ENCODE measurements at regions of chr7 and their contacts with region 1.

Region 1: DNA sequence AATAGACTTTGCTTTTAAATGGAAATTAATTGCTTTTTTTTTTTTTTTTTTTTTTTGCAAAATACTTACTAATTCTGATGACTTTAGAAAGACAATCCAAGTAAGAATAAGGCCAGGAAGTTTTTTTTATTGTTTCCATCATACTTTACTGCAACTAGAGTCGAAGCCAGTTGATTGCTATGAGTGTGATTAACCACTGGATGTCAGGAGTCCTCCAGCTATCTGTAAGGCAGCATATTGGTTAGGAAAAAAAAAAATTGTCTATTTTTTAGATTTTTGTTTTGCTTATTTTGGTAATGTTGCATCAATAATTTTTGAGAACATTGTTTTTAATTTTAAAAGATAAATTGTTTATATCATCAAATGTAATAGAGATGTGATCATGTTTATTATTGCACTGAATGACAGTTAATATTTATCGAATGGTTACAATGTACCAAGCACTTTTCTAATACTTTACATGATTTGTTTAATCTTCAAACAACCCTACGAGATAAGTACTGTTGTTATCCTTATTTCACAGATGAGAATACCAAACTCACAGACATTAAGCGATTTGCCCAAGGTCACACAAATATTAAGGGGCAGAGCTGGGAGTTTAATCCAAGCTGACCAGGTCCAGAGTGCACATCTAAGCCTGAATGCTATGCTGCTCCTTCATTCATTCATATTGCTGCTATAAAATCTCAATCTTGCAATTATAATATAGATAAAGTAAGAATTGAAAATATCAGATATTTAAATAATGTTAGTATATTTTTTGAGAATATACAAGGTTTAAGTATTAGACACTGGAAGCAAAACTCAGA is 19.9 kb upstream of the LMOD2 start:
- DNase-seq: peak; percentile 59
- H3K4me3 Mint-ChIP-seq: no peak overlapping the region
- H3K27ac Mint-ChIP-seq: no peak overlapping the region
- H3K4me1 Mint-ChIP-seq: peaks cover 22% of the 10 kb centered on the region
- H3K27me3 Mint-ChIP-seq: no peaks in the 10 kb centered on the region
- CTCF ChIP-seq: peak; percentile 70

Region 2: DNA sequence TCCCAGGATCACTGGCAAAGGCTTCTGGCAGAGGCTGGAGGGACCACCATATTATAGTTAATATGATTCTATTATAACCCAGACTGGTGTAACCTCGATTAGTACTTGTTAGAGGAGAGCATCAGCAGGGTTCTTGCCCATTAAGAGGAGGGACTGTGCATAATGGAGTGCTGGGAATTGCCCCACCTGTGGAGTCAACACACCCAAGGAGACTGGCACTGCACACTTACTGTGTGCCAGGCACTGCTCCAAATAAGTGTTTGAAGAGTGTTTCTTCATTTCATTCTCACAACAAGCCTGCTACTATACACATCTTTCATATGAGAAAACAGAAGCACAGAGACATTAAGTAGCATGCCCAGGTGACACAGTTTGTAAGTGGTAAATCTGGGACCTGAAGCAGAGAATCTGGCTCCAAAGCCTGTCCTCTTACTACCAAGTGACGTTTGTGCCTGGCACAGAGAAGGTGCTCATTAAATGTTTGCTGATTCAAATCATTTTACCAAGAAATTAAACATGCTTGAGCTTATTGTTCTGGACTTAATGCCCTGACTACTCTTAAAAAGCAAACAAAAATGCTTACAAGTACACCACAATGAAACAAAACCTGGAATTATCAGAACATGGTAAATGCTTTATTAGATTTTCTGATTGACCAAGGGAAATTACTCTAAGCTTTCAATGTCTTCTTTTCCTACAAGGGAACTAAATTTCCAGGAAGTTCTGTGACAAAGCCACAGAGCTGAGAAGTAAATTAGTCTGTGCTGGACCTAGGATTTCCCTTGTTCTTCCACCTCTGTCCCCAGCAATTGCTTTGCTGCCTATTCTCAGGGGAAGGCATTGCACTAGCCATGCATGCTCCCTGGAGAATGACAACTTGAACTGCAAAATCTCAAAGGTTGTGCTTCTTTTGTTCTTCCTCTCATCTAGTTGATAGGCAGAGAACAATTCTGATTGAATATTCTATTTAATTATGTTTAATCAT is 436.8 kb before region 1 on chr7:
- CTCF ChIA-PET with region 1: no interaction called
- POLR2A ChIA-PET with region 1: no interaction called
- intact Hi-C with region 1: no loop called
- DNase-seq: no peak
- H3K4me3 Mint-ChIP-seq: no peak overlapping the region
- H3K27ac Mint-ChIP-seq: no peak overlapping the region
- H3K4me1 Mint-ChIP-seq: peaks cover 6% of the 10 kb centered on the region
- H3K27me3 Mint-ChIP-seq: peaks cover 11% of the 10 kb centered on the region
- CTCF ChIP-seq: no peak

Region 3: GRCh38 chr7:123580406-123581161 is 55.2 kb before region 1 on chr7:
- CTCF ChIA-PET with region 1: interaction called, 6 read pairs
- POLR2A ChIA-PET with region 1: no interaction called
- intact Hi-C with region 1: loop called (anchors 2 kb)
- DNase-seq: peak; percentile 68
- H3K4me3 Mint-ChIP-seq: no peak overlapping the region
- H3K27ac Mint-ChIP-seq: no peak overlapping the region
- H3K4me1 Mint-ChIP-seq: no peaks in the 10 kb centered on the region
- H3K27me3 Mint-ChIP-seq: no peaks in the 10 kb centered on the region
- CTCF ChIP-seq: peak; percentile 66

Region 4: DNA sequence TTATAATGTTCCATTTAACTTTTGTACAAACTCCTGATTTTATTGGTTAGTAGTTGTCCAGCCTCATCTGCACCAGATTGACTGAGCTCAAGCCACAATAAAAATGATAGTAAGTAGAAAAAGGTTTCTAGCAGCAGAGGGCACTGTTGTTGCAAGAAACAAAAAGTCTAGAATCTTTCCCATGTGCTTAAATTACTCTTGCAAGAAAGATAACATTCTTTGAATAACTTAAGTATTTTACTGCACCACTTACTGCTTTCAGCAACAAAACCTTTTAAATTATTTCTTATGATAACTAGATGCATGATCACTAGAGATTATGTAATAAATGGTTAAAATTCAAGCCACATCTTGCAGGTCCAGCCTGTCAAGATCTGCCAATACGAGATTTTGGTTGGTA is 46.9 kb after region 1 on chr7:
- CTCF ChIA-PET with region 1: interaction called, 16 read pairs
- POLR2A ChIA-PET with region 1: no interaction called
- intact Hi-C with region 1: loop called (anchors 2 kb)
- DNase-seq: peak; percentile 58
- H3K4me3 Mint-ChIP-seq: no peak overlapping the region
- H3K27ac Mint-ChIP-seq: no peak overlapping the region
- H3K4me1 Mint-ChIP-seq: no peaks in the 10 kb centered on the region
- H3K27me3 Mint-ChIP-seq: no peaks in the 10 kb centered on the region
- CTCF ChIP-seq: peak; percentile 46

Region 5: GRCh38 chr7:123871998-123872867 is 236.5 kb after region 1 on chr7:
- CTCF ChIA-PET with region 1: interaction called, 8 read pairs
- POLR2A ChIA-PET with region 1: interaction called, 4 read pairs
- intact Hi-C with region 1: loop called (anchors 2 kb)
- DNase-seq: peak; percentile 72
- H3K4me3 Mint-ChIP-seq: no peak overlapping the region
- H3K27ac Mint-ChIP-seq: no peak overlapping the region
- H3K4me1 Mint-ChIP-seq: no peaks in the 10 kb centered on the region
- H3K27me3 Mint-ChIP-seq: no peaks in the 10 kb centered on the region
- CTCF ChIP-seq: peak; percentile 48

Region 6: DNA sequence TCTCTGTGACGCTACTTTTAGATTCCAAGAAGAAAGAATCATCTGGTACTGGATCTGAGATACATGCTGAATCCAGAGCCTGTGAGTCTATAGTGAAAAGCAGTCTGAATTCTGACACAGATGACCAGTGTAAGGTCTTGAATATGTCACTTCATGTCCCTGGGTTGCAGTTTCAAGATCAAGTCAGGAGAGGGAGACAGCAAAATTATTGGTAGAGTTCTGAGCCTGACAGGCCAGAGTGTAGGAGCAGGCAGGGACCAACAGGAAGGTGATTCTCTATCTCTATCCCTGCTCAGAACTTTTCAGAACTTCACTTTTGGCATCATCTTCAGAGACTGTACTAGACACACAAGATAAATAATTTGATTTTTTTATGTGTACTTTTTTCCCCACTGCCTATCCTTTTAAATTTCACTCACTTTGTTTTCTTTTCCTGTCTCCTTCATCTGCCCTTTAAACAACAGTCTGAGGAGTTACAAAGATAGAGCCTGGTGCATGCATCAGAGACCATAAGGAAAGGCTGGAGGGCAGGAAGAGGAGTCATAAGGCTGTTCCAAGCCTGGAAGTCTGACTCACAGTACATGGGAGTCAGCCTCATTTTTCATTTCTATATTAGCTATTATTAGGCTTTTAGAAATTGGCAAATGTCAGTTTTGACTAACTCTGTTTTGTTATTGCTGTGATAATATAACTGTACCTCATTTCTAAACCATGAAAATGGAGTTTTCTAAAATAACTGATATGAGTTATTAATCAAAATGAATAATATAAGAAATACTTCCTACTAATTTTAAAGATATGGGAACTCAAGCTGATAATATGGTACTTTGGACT is 517.3 kb after region 1 on chr7:
- CTCF ChIA-PET with region 1: no interaction called
- POLR2A ChIA-PET with region 1: no interaction called
- intact Hi-C with region 1: loop called (anchors 5 kb)
- DNase-seq: peak; percentile 62
- H3K4me3 Mint-ChIP-seq: no peak overlapping the region
- H3K27ac Mint-ChIP-seq: peak overlapping the region; percentile 75
- H3K4me1 Mint-ChIP-seq: peaks cover 9% of the 10 kb centered on the region
- H3K27me3 Mint-ChIP-seq: no peaks in the 10 kb centered on the region
- CTCF ChIP-seq: peak; percentile 29